Mammary epithelial cell (primary cell): ENCODE measurements at regions of chr4 and their contacts with region 1.

Region 1: DNA sequence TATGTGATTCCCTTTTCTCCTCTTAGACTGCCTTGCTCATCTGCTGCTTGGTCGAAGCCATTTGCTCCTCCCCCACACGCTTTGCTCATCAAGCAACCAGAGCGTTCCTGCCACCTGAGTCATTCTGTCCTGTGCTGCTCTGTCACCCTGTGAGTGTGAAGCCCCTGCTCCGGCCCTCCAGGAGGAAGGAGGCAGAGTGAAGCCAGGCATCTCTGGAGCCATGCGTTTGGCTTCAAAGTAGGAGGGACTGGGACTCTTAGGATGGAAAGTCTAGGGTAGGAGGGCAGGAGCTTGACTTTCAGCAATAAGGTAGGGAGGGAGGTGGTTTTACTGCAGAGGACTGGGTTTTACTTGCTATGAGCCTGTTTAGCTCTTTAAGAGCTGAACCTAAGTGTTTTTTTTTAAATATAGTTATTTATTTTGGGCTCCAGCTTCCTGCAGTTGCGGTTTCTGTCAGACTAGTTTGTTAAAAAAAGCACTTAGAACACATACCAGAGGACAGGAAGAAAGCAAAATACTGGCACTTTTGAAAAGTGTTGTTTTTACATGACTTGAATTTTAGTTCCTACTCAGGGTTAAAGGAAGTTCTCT is 63.6 kb downstream of the SPINK2 start:
- DNase-seq: no peak
- H3K4me3 ChIP-seq: no peak overlapping the region
- H3K27ac ChIP-seq: no peak overlapping the region
- H3K4me1 ChIP-seq: peaks cover 3% of the 10 kb centered on the region
- H3K27me3 ChIP-seq: no peaks in the 10 kb centered on the region
- CTCF ChIP-seq: no peak

Region 2: DNA sequence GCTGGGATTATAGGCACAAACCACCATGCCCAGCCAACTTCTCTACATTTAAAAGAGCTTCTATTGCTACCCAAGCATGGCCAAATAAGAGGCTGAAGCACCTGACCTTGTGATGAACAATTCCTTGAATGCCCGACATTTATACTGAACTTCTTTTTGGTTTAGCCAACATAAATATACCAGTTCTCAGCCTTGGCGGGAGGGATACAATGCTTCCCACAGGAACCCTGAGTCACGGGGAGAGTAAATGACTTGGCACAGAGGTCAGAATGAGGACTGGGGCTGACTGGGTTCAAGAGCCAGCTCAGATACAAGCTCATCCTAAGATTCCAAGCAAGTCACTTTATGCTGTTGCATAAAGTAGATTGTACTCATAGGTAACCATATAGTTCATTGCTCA is 82.9 kb before region 1 on chr4:
- CTCF ChIA-PET with region 1: no interaction called
- dilution Hi-C with region 1: loop called (anchors 5 kb)
- in situ Hi-C with region 1: no loop called
- intact Hi-C with region 1: no loop called
- DNase-seq: no peak
- H3K4me3 ChIP-seq: no peak overlapping the region
- H3K27ac ChIP-seq: no peak overlapping the region
- H3K4me1 ChIP-seq: no peaks in the 10 kb centered on the region
- H3K27me3 ChIP-seq: peaks cover 9% of the 10 kb centered on the region
- CTCF ChIP-seq: no peak

Region 3: GRCh38 chr4:56698329-56698728 is 59.6 kb before region 1 on chr4:
- CTCF ChIA-PET with region 1: no interaction called
- dilution Hi-C with region 1: loop called (anchors 5 kb)
- in situ Hi-C with region 1: no loop called
- intact Hi-C with region 1: no loop called
- DNase-seq: no peak
- H3K4me3 ChIP-seq: no peak overlapping the region
- H3K27ac ChIP-seq: no peak overlapping the region
- H3K4me1 ChIP-seq: no peaks in the 10 kb centered on the region
- H3K27me3 ChIP-seq: peaks cover 4% of the 10 kb centered on the region
- CTCF ChIP-seq: no peak

Region 4: GRCh38 chr4:56799824-56800756 is 42.2 kb after region 1 on chr4:
- CTCF ChIA-PET with region 1: no interaction called
- dilution Hi-C with region 1: no loop called
- in situ Hi-C with region 1: no loop called
- intact Hi-C with region 1: no loop called
- DNase-seq: peak; percentile 70
- H3K4me3 ChIP-seq: peak overlapping the region; percentile 65 to 75 (median 74)
- H3K27ac ChIP-seq: no peak overlapping the region
- H3K4me1 ChIP-seq: no peaks in the 10 kb centered on the region
- H3K27me3 ChIP-seq: no peaks in the 10 kb centered on the region
- CTCF ChIP-seq: peak; percentile 80 to 95